PC-9 (cell line): ENCODE measurements at regions of chr15 and their contacts with region 1.

Region 1: DNA sequence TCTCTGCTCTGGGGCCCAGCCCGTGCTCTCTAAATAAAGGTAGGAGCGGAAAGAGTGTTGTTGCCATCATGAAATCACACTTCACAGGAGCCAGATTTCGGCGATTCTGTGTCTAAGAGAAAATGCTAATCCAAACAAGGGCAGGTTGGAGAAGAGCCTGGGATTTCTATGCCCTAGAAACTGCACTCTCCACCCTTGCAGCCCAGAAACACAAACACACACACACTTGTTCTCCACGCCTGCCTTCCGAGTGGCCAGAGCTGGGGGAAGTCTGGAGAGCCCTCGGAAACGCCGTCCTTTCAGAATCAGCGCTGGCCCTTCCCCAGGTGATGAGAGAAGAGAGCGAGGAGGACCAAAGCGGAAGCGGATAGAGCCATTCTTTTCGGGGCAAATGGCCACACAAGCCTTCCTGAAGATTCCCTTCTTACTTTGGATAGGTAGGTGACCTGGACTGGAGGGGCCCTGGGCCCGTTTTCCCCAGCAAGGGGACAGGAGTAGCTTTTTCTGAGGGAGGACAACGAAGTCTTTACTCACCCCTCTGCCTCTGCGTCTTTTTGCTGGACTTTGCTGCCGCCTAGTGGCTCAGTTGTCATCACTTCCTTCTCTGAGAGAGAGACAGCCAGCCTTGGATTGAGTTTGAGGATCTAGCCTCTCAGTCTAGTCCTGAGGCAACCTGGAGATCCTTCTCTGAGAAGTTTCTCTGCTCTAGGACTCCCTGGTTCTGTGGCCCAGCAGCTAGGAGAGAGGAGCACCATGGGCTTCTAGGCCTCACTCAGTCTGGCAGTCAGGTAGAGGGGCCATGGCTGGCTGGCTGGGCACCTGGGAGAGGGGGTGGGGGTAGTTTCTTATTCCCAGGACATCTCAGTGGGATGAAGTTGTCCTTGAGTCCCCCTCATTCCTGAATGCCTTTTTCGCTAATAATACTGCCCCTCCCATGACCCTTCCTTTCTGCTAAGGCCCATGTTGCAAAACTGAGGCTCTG is 37.7 kb downstream of the SENP8 start:
- DNase-seq: peak; percentile 68 to 81
- H3K4me3 ChIP-seq: peak overlapping the region; percentile 4; the same call in 1 of the 2 replicates
- H3K27ac ChIP-seq: no peak overlapping the region
- H3K4me1 ChIP-seq: peaks cover 28% of the 10 kb centered on the region
- H3K27me3 ChIP-seq: no peaks in the 10 kb centered on the region
- CTCF ChIP-seq: peak; percentile 93

Region 2: DNA sequence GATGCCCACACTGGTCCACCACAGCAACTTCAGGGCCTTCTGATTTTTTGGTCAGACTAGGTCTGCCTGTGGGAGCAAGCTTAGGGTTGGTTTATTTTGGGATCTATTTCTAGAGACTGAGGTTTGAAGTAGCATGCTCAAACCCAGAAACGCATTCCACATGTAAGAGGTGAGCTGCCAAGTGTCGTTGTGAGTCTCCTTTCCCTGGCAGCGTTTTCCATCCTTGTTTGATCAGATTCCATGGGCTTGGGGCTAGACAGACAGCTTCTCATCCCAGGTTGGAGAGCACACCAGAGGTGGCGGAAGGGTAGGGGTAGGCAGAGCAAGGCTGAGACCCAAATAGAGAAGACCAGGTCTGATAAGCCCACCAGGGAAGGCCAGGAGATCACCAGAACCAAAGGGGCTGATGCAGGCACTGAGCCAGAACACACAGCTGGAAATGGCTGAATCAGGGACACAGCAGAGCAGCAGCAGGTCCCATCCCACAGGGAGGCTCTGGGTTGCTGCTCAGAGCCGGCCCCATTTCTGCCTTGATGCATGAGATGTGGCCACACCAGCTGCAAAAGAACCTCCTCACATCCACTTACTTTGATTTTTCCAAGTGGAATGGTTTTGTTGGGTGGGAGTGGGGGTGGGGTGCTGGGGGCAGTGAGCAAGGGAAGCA is 853.8 kb before region 1 on chr15:
- CTCF ChIA-PET with region 1: no interaction called
- POLR2A ChIA-PET with region 1: no interaction called
- intact Hi-C with region 1: no loop called
- DNase-seq: no peak
- H3K4me3 ChIP-seq: no peak overlapping the region
- H3K27ac ChIP-seq: no peak overlapping the region
- H3K4me1 ChIP-seq: peaks cover 12% of the 10 kb centered on the region
- H3K27me3 ChIP-seq: no peaks in the 10 kb centered on the region
- CTCF ChIP-seq: no peak

Region 3: DNA sequence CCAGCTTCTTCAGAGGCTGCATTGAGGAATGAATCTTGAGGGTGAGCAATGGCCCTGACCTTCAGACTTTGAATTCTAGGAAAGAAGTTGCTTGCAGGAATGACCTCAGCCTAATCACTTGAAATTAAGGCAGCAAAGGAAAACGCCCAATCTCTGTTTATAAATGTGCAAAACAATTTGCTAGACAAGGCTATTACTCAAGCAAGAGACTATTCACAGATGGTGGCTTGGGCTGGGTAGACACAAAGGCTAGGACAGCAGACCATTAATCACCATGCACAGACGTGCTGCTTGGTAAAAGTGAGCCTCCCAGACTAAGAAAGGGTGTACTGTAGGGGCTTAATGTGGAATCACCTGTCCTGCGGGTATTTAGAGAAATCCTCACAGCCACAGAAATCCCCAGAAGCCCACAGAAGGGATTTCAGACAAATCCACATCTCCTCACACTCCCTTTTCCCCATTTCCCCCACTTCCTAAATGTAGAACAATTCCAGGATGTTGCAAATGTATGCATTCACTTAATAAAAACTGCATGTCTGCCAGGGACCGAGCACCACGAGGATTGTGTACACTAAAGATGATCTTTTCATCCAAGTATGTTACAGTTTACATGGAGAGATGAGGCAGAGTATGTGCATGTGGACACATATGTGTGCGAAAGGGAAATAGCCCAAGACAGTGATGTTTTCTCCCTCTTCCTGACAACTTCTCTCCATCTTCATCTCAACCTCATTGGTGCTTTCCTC is 781.1 kb before region 1 on chr15:
- CTCF ChIA-PET with region 1: interaction called, 11 read pairs
- POLR2A ChIA-PET with region 1: no interaction called
- intact Hi-C with region 1: no loop called
- DNase-seq: no peak
- H3K4me3 ChIP-seq: no peak overlapping the region
- H3K27ac ChIP-seq: no peak overlapping the region
- H3K4me1 ChIP-seq: no peaks in the 10 kb centered on the region
- H3K27me3 ChIP-seq: no peaks in the 10 kb centered on the region
- CTCF ChIP-seq: no peak

Region 4: GRCh38 chr15:71448688-71449114 is 707.2 kb before region 1 on chr15:
- CTCF ChIA-PET with region 1: no interaction called
- POLR2A ChIA-PET with region 1: no interaction called
- intact Hi-C with region 1: loop called (anchors 2 kb)
- DNase-seq: peak; percentile 47
- H3K4me3 ChIP-seq: no peak overlapping the region
- H3K27ac ChIP-seq: no peak overlapping the region
- H3K4me1 ChIP-seq: peaks cover 46% of the 10 kb centered on the region
- H3K27me3 ChIP-seq: no peaks in the 10 kb centered on the region
- CTCF ChIP-seq: peak; percentile 83

Region 5: DNA sequence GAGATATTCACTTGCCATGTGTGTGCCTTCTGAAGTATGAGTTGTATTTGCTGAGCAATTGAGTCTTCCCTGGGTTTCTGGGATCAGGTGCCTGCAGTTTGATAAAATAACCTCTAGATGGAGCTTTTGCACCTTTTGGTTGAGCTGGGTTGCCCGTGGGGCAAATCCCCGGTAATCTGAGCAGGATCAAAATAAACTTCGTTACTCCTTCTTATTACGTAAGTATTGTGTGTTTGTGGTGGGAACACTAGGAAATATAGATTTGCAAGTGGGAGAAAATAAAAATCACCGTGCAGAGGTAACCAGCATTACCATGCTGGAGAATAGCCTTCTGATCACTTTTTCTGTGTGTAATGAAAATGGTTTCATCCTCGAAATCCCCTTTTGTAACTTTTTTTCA is 622.9 kb before region 1 on chr15:
- CTCF ChIA-PET with region 1: no interaction called
- POLR2A ChIA-PET with region 1: no interaction called
- intact Hi-C with region 1: loop called (anchors 5 kb)
- DNase-seq: peak; percentile 35 to 37
- H3K4me3 ChIP-seq: no peak overlapping the region
- H3K27ac ChIP-seq: no peak overlapping the region
- H3K4me1 ChIP-seq: 0 out of 2 replicates have a peak, but pooled peaks cover under 1% of the 10 kb centered on the region
- H3K27me3 ChIP-seq: no peaks in the 10 kb centered on the region
- CTCF ChIP-seq: peak; percentile 68

Region 6: GRCh38 chr15:71971905-71972304 is 184.0 kb before region 1 on chr15:
- CTCF ChIA-PET with region 1: no interaction called
- POLR2A ChIA-PET with region 1: no interaction called
- intact Hi-C with region 1: loop called (anchors 1 kb)
- DNase-seq: peak; percentile 46 to 57
- H3K4me3 ChIP-seq: no peak overlapping the region
- H3K27ac ChIP-seq: peak overlapping the region; percentile 23; the same call in 1 of the 2 replicates
- H3K4me1 ChIP-seq: peaks cover 53% of the 10 kb centered on the region
- H3K27me3 ChIP-seq: no peaks in the 10 kb centered on the region
- CTCF ChIP-seq: no peak

Region 7: GRCh38 chr15:72117486-72118399 is 38.2 kb before region 1 on chr15 and contains the start of gene MYO9A:
- CTCF ChIA-PET with region 1: interaction called, 6 read pairs
- POLR2A ChIA-PET with region 1: no interaction called
- intact Hi-C with region 1: loop called (anchors 1 kb)
- DNase-seq: peak; percentile 87 to 97
- H3K4me3 ChIP-seq: peak within 1 kb of the TSS; percentile 73
- H3K27ac ChIP-seq: peak within 1 kb of the TSS; percentile 72
- H3K4me1 ChIP-seq: peaks cover 15% of the 10 kb centered on the region; the same call in 1 of the 2 replicates
- H3K27me3 ChIP-seq: no peaks in the 10 kb centered on the region
- CTCF ChIP-seq: no peak
- total RNA-seq, gene MYO9A: 34.0 and 37.3 TPM in 2 replicates